K562 (cell line): ENCODE measurements at regions of chr9 and their contacts with region 1.

Region 1: GRCh38 chr9:131237931-131238401 is 38.3 kb downstream of the FAM78A start:
- DNase-seq: peak in 1 of 4 experiments; percentile 58
- ATAC-seq: peak; percentile 11
- H3K4me3 ChIP-seq: no peak overlapping the region
- H3K27ac ChIP-seq: no peak overlapping the region
- H3K4me1 ChIP-seq: peaks cover 3 to 31% of the 10 kb centered on the region in 2 experiments; a peak in 3 of 5 replicates
- H3K27me3 ChIP-seq: peaks cover 0 to 13% of the 10 kb centered on the region in 2 experiments; a peak in 2 of 5 replicates
- CTCF ChIP-seq: no peak
- EP300 ChIP-seq: no peak
- POLR2A ChIP-seq: no peak
- RAD21 ChIP-seq: no peak

Region 2: GRCh38 chr9:130780865-130781504 is 457.0 kb before region 1 on chr9:
- CTCF ChIA-PET with region 1: no interaction called
- POLR2A ChIA-PET with region 1: no interaction called
- in situ Hi-C with region 1: no loop called
- intact Hi-C with region 1: no loop called
- DNase-seq: peak in 1 of 4 experiments; percentile 42
- ATAC-seq: peak; percentile 18
- H3K4me3 ChIP-seq: no peak overlapping the region
- H3K27ac ChIP-seq: no peak overlapping the region
- H3K4me1 ChIP-seq: peaks cover 0 to 6% of the 10 kb centered on the region in 2 experiments; a peak in 2 of 5 replicates
- H3K27me3 ChIP-seq: no peaks in the 10 kb centered on the region
- CTCF ChIP-seq: no peak
- EP300 ChIP-seq: no peak
- POLR2A ChIP-seq: no peak
- RAD21 ChIP-seq: no peak

Region 3: GRCh38 chr9:131068076-131068816 is 169.7 kb before region 1 on chr9:
- CTCF ChIA-PET with region 1: no interaction called
- POLR2A ChIA-PET with region 1: no interaction called
- in situ Hi-C with region 1: no loop called
- intact Hi-C with region 1: no loop called
- DNase-seq: peak in 1 of 4 experiments; percentile 59
- ATAC-seq: peak; percentile 1; the same call in 2 of the 3 replicates
- H3K4me3 ChIP-seq: no peak overlapping the region
- H3K27ac ChIP-seq: no peak overlapping the region
- H3K4me1 ChIP-seq: peaks cover 0 to 37% of the 10 kb centered on the region in 2 experiments; a peak in 1 of 5 replicates
- H3K27me3 ChIP-seq: peaks cover 91 to 100% of the 10 kb centered on the region in 2 experiments
- CTCF ChIP-seq: no peak
- EP300 ChIP-seq: no peak
- POLR2A ChIP-seq: no peak
- RAD21 ChIP-seq: no peak

Region 4: GRCh38 chr9:131220485-131220884 is 17.5 kb before region 1 on chr9:
- CTCF ChIA-PET with region 1: no interaction called
- POLR2A ChIA-PET with region 1: interaction called, 156 read pairs
- in situ Hi-C with region 1: no loop called
- intact Hi-C with region 1: no loop called
- DNase-seq: peak in 1 of 4 experiments; percentile 66
- ATAC-seq: peak; percentile 17
- H3K4me3 ChIP-seq: no peak overlapping the region
- H3K27ac ChIP-seq: no peak overlapping the region
- H3K4me1 ChIP-seq: peaks cover 0 to 12% of the 10 kb centered on the region in 2 experiments; a peak in 3 of 5 replicates
- H3K27me3 ChIP-seq: no peaks in the 10 kb centered on the region
- CTCF ChIP-seq: no peak
- EP300 ChIP-seq: no peak
- POLR2A ChIP-seq: no peak
- RAD21 ChIP-seq: no peak

Region 5: GRCh38 chr9:131253891-131254491 is 16.0 kb after region 1 on chr9:
- CTCF ChIA-PET with region 1: no interaction called
- POLR2A ChIA-PET with region 1: interaction called, 50 read pairs
- in situ Hi-C with region 1: no loop called
- intact Hi-C with region 1: no loop called
- DNase-seq: no peak
- ATAC-seq: peak; percentile 1; the same call in 1 of the 3 replicates
- H3K4me3 ChIP-seq: no peak overlapping the region
- H3K27ac ChIP-seq: no peak overlapping the region
- H3K4me1 ChIP-seq: peaks cover 12 to 29% of the 10 kb centered on the region in 2 experiments
- H3K27me3 ChIP-seq: peaks cover 0 to 7% of the 10 kb centered on the region in 2 experiments; a peak in 1 of 5 replicates
- CTCF ChIP-seq: no peak
- EP300 ChIP-seq: no peak
- POLR2A ChIP-seq: no peak
- RAD21 ChIP-seq: no peak

Region 6: GRCh38 chr9:131762356-131762932 is 524.5 kb after region 1 on chr9:
- CTCF ChIA-PET with region 1: no interaction called
- POLR2A ChIA-PET with region 1: no interaction called
- in situ Hi-C with region 1: no loop called
- intact Hi-C with region 1: no loop called
- DNase-seq: peak; percentile 77 to 93 (median 90)
- ATAC-seq: peak; percentile 99
- H3K4me3 ChIP-seq: no peak overlapping the region
- H3K27ac ChIP-seq: no peak overlapping the region
- H3K4me1 ChIP-seq: peaks cover 0 to 7% of the 10 kb centered on the region in 2 experiments; a peak in 2 of 5 replicates
- H3K27me3 ChIP-seq: peaks cover 12 to 30% of the 10 kb centered on the region in 2 experiments
- CTCF ChIP-seq: peak; percentile 79 to 98 (median 92)
- EP300 ChIP-seq: no peak
- POLR2A ChIP-seq: no peak
- RAD21 ChIP-seq: peak; percentile 91 to 96